ENCODE measurements at regions of chr19 and their contacts with region 1.

Region 1: GRCh38 chr19:4108767-4109625 is 14.9 kb downstream of the MAP2K2 start:
- DNase-seq: peak; percentile 39 to 92 (median 76)
- ATAC-seq: peak; percentile 59
- H3K4me3 ChIP-seq: peak overlapping the region; percentile 16
- H3K4me3 Mint-ChIP-seq: peak overlapping the region; percentile 68
- H3K27ac ChIP-seq: peak overlapping the region; percentile 53 to 75
- H3K27ac Mint-ChIP-seq: peak overlapping the region; percentile 96
- H3K4me1 ChIP-seq: peaks cover 75% of the 10 kb centered on the region
- H3K4me1 Mint-ChIP-seq: peaks cover 46% of the 10 kb centered on the region
- H3K27me3 ChIP-seq: no peaks in the 10 kb centered on the region
- H3K27me3 Mint-ChIP-seq: no peaks in the 10 kb centered on the region
- CTCF ChIP-seq: no peak

Region 2: DNA sequence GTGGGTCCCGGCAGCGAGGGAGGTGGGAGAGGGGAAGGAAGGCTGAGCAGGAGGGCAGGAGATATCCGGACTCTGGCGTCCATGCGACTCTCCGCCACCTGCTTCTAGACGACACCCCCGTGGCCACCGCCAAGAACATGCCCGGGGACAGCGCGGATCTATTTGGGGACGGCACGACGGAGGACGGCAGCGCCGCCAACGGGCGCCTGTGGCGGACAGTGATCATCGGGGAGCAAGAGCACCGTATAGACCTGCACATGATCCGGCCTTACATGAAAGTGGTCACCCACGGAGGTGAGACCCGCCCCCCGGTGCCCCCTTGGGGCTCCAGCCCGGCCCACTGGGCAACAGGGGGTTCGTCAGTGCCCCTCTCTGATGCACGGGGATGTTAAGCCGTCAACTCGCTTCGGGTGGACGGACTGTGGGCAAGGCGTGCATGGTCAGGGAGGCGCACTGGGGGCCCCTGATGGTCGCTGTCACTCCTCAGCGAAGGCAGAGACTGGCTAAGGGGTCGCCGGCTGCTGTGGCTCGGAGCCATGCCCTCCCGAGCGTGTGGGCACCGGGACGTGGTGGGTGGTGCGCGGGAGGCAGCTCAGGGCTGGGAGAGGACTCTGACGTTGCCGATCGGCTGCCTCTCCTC is 201.2 kb before region 1 on chr19:
- CTCF ChIA-PET with region 1: no interaction called
- POLR2A ChIA-PET with region 1: no interaction called
- intact Hi-C with region 1: no loop called
- DNase-seq: no peak
- ATAC-seq: no peak
- H3K4me3 ChIP-seq: no peak overlapping the region
- H3K4me3 Mint-ChIP-seq: no peak overlapping the region
- H3K27ac ChIP-seq: no peak overlapping the region
- H3K27ac Mint-ChIP-seq: no peak overlapping the region
- H3K4me1 ChIP-seq: no peaks in the 10 kb centered on the region
- H3K4me1 Mint-ChIP-seq: no peaks in the 10 kb centered on the region
- H3K27me3 ChIP-seq: no peaks in the 10 kb centered on the region
- H3K27me3 Mint-ChIP-seq: no peaks in the 10 kb centered on the region
- CTCF ChIP-seq: no peak

Region 3: DNA sequence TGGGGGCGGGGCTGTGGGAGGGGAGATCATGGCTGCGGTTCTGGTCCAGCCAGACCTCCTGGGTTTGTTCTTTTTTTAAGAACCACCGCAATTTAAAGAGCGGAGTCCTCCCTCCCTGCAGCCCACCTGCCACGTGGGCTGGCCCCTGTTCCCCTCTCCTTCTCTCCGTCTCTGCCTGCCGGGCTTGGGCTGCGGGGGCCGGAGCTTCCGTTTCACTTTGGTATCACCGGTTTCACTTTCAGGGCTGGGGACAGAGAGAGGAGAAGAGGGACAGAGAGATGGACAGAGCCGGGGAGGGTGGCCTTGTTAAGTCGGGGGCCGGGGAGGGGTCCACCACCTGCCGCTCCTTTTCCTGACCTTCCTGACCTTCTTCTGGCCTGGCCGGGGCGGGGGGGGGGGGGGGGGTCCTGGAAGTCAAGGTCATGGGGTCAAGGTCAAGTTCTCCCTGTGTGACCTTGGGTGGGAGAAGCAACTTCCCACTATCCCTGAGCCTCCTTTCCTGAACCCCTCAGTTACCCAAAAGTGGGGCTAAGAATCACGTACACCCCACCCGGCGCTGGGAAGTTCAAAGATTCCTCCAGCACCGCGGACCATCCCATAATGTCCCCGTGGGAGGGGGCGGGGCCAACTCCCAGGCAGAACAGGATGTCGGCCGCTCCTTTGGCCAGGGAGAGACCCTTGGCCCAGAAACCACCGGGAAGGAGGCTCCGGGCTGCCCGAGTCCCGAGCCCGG is 30.9 kb before region 1 on chr19:
- CTCF ChIA-PET with region 1: no interaction called
- POLR2A ChIA-PET with region 1: interaction called, 16 read pairs
- intact Hi-C with region 1: no loop called
- DNase-seq: peak in 8 of 14 experiments; percentile 35 to 75 (median 58)
- ATAC-seq: peak; percentile 80
- H3K4me3 ChIP-seq: peak overlapping the region; percentile 79
- H3K4me3 Mint-ChIP-seq: peak overlapping the region; percentile 88
- H3K27ac ChIP-seq: peak overlapping the region; percentile 51 to 59
- H3K27ac Mint-ChIP-seq: peak overlapping the region; percentile 83
- H3K4me1 ChIP-seq: peaks cover 52% of the 10 kb centered on the region
- H3K4me1 Mint-ChIP-seq: peaks cover 31% of the 10 kb centered on the region
- H3K27me3 ChIP-seq: no peaks in the 10 kb centered on the region
- H3K27me3 Mint-ChIP-seq: no peaks in the 10 kb centered on the region
- CTCF ChIP-seq: no peak

Region 4: DNA sequence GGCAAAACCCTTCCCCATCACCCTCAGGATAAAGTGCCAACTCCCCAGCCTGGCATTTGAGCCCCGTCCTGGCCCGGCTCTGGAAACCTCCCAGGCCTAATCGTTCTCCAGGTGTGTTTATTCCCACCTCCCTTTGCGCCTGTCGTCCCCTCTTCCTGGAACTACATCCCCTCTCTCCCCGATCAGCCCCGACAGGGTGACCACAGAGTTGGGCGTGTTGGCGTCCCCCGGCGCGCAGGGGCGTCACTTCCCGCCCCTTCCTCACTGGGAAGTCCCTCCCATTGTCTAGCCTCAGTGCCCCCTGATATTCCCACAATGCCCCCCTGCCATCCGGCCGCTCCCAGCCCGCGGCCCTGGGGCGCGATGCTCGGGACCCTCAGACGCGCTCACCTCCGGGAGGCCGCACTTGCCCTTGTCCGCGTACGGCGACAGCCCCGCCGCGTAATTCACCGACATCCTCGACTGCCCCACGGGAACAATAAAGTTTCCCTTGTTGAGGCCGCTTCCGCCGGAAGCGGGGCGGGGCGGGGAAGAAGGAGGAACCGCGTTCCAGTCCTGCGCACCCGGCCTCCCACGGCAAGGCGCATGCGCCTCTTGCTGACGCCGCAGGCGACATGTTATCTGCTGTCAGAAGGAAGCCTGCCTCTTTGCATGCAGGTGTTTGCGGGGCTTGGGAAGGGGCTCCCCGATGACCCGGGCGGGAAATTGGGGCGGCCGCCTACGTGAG is 73.3 kb after region 1 on chr19 and contains the starts of genes ANKRD24 and SIRT6:
- CTCF ChIA-PET with region 1: no interaction called
- POLR2A ChIA-PET with region 1: no interaction called
- intact Hi-C with region 1: no loop called
- DNase-seq: peak; percentile 90 to 98 (median 96)
- ATAC-seq: peak; percentile 80
- H3K4me3 ChIP-seq: peak within 1 kb of the TSS; percentile 96
- H3K4me3 Mint-ChIP-seq: peak within 1 kb of the TSS; percentile 99
- H3K27ac ChIP-seq: peak within 1 kb of the TSS; percentile 66 to 80
- H3K27ac Mint-ChIP-seq: peak within 1 kb of the TSS; percentile 96
- H3K4me1 ChIP-seq: peaks cover 47% of the 10 kb centered on the region
- H3K4me1 Mint-ChIP-seq: peaks cover 32% of the 10 kb centered on the region
- H3K27me3 ChIP-seq: no peaks in the 10 kb centered on the region
- H3K27me3 Mint-ChIP-seq: peaks cover 3% of the 10 kb centered on the region
- CTCF ChIP-seq: no peak
- total RNA-seq, gene ANKRD24: 0.59 to 0.60 TPM
- total RNA-seq, gene SIRT6: 11.2 to 14.2 TPM

Measured in CD4-positive, alpha-beta T cell (primary cell).